ENCODE measurements at regions of chr3 and their contacts with region 1.

Region 1: DNA sequence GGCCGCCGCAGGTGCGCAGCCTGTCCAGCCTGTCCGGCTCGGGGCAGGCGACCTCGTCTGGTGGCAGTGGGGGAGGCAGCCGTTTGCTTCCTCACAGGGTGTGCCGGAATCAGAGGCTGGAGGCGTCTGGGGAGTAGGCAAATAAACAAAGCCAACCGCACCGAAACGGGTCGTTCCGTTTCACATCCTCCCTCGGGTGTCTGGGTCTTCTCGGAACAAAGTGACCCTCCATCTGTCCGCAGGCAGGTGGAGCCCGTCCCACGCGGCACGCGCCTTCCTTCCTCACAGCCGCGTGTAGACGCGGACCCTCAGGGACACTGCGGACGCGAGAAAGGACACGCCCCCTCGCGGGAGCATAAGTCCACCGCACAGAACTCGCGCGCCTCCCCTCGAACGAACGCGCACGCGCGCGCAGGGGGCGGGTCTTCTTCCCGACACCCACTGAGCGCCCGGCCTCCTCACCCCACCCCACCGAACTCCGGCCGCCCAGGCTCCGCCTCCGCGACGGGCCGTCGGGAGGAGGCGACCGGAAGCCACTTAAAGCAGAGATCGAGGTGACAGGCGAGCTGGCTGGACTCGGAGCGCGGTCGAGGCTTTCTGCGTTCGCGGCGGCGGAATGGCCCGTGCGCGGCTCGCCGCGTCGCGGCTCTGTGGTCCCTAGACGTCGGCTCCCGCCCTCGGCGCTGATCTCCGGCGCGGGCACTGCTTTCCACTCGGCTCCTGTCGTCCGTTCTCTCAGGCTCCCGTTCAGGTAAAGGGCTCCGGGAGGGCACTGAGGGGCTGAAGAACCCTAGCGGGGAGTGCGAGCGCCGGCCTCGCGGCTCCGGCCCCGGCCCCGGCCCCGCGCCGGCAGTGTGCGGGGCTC is at the start of gene TIPARP:
- DNase-seq: peak; percentile 99
- H3K4me3 ChIP-seq: peak within 1 kb of the TSS; percentile 93
- H3K4me3 Mint-ChIP-seq: peak within 1 kb of the TSS; percentile 90 to 98 (median 97)
- H3K27ac ChIP-seq: peak within 1 kb of the TSS; percentile 95
- H3K27ac Mint-ChIP-seq: peak within 1 kb of the TSS; percentile 86 to 99 (median 98)
- H3K4me1 ChIP-seq: peaks cover 35% of the 10 kb centered on the region
- H3K4me1 Mint-ChIP-seq: peaks cover 40 to 44% (median 42%) of the 10 kb centered on the region in 3 donors
- H3K27me3 ChIP-seq: no peaks in the 10 kb centered on the region
- H3K27me3 Mint-ChIP-seq: no peaks in the 10 kb centered on the region
- total RNA-seq, gene TIPARP: 36.0 to 37.0 TPM

Region 2: GRCh38 chr3:155037508-155038202 is 1636.6 kb before region 1 on chr3:
- CTCF ChIA-PET with region 1: no interaction called
- POLR2A ChIA-PET with region 1: no interaction called
- DNase-seq: no peak
- H3K4me3 ChIP-seq: no peak overlapping the region
- H3K4me3 Mint-ChIP-seq: no peak overlapping the region
- H3K27ac ChIP-seq: peak overlapping the region; percentile 21
- H3K27ac Mint-ChIP-seq: no peak overlapping the region
- H3K4me1 ChIP-seq: no peaks in the 10 kb centered on the region
- H3K4me1 Mint-ChIP-seq: no peaks in the 10 kb centered on the region
- H3K27me3 ChIP-seq: no peaks in the 10 kb centered on the region
- H3K27me3 Mint-ChIP-seq: no peaks in the 10 kb centered on the region

Region 3: DNA sequence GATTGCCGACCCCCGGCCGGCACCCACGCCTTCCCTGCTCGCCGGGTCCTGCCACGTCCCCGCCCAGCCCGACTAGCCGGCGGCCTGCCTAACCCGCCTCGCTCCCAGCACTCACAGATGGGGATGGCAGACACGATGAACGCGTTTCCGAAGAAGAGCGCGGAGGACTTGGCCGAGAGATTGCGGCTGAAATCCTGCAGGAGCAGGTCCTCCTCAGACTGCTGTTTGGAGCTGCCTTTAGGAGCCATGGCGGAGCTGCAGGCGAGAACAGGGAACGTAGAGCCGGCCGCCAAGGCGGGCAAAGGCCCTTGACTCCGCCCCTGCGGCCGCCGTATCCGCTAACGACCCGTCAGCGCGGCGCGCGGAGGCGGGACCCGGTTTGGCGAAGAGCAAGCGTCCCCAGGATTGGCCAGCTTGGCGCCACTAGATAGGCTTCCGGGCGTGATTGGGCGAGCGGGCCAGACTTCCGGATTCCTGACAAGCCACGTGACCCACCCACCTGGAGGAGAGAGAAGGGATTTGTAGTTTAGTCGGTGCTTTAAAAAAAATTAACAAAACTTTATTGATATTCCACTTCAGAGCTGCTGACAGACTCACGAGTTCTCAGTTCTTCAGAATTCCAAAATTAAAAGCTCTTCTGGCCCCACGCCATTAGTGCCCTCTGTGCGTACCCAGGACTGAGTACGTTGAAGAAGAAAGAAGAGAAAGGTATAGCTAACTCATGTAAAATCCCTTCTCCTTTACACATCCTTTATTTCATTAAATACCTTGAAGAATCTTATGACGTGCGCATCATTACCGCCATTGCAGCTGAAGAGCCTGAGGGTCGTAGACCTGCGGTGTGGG is 119.2 kb before region 1 on chr3 and contains the start of gene SSR3:
- CTCF ChIA-PET with region 1: interaction called, 27 read pairs
- POLR2A ChIA-PET with region 1: interaction called, 30 read pairs
- DNase-seq: peak; percentile 98 to 99 (median 99)
- H3K4me3 ChIP-seq: peak within 1 kb of the TSS; percentile 92
- H3K4me3 Mint-ChIP-seq: peak within 1 kb of the TSS; percentile 96 to 99 (median 97)
- H3K27ac ChIP-seq: peak within 1 kb of the TSS; percentile 91
- H3K27ac Mint-ChIP-seq: peak within 1 kb of the TSS; percentile 85 to 98 (median 96)
- H3K4me1 ChIP-seq: peaks cover 29% of the 10 kb centered on the region
- H3K4me1 Mint-ChIP-seq: peaks cover 46 to 56% (median 55%) of the 10 kb centered on the region in 3 donors
- H3K27me3 ChIP-seq: no peaks in the 10 kb centered on the region
- H3K27me3 Mint-ChIP-seq: no peaks in the 10 kb centered on the region
- total RNA-seq, gene SSR3: 171 to 175 TPM

Region 4: DNA sequence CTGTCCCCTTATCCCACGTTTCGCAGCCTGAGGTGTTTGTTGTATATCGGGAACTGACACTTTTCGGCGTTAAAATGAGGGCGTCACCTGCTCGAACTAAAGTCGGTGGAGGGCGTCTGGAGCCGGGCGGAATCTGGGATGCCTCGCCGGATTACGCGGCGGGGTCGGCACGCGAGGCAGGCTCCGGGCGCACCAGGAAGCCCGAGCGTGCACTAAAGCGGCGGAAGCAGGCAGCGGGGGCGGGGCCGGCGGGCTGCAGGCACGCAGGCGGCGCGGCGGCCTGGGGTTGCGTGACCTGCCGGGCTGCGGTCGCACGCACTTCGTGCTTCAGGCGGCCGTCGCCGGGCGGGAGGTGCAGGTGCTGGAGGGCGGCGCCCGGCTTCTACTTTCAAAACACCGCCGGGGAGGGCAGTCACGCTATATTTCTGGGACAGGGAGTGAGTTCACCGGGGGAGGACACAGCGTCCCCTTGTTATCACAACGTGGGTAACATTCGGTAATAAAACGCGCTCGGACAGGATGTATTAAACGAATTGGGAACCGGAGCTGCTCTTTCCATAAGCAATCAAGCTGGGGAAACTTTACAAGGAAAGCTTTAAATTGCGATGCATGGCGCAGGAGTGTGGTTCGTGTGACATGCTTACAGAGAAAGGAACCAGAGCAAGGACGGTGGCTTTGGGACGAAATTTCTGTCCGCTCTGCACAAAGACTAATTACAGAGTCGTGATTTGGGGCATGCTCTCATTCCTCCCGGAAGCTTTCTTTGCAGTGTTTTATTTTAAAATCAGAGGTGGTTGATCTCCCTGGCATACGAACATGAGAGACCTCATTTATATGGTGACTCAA is 142.7 kb after region 1 on chr3:
- CTCF ChIA-PET with region 1: interaction called, 12 read pairs
- POLR2A ChIA-PET with region 1: interaction called, 8 read pairs
- DNase-seq: peak; percentile 73 to 91 (median 84)
- H3K4me3 ChIP-seq: peak overlapping the region; percentile 83
- H3K4me3 Mint-ChIP-seq: peak overlapping the region; percentile 95 to 97 (median 95)
- H3K27ac ChIP-seq: peak overlapping the region; percentile 43
- H3K27ac Mint-ChIP-seq: peak overlapping the region; percentile 85 to 99 (median 97)
- H3K4me1 ChIP-seq: peaks cover 9% of the 10 kb centered on the region
- H3K4me1 Mint-ChIP-seq: peaks cover 44 to 53% (median 52%) of the 10 kb centered on the region in 3 donors
- H3K27me3 ChIP-seq: no peaks in the 10 kb centered on the region
- H3K27me3 Mint-ChIP-seq: peaks cover 0 to 2% of the 10 kb centered on the region in 2 donors

Region 5: DNA sequence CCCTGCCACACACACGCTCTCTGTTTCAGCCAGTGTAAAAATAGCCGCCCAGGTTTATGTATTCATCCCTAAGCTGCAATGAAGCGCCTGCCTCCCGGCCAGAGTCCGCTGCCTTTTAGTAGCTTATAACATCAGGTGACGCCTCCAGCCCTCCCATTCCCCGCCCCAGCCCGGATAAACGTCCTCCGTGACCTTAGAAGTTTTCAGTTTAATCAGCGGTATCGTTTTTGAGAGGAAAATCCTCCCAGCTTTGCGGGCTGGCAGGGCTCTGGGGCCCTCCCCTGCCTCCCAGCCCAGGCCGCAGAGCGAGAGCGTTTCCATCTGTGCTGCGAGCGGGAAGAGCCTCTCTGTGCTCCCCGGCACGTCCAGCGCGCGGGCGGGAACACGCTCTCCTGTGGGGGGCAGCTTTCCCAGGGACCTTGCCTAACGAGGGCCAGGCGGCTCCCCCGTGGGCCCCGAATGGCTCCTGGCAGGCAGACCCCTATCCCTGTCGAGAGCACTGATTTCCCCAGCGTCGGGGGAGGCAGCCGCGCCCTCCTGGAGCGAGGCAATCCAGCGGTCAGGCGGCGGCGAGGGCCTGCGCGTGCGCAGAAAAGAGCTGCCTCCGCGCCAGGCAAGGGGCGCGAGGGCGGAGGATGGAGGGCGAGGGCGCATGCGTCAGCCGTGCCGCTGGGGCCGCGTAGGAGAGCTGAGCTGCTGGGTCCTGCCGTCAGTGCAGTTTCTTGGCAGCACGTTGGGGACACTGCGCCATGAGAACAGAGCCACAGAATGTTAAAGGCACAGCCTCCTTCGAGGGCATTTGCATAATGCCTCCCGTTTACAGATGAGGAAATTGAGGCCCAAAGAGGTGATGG is 414.6 kb after region 1 on chr3:
- CTCF ChIA-PET with region 1: interaction called, 33 read pairs
- POLR2A ChIA-PET with region 1: interaction called, 5 read pairs
- DNase-seq: peak; percentile 88 to 96 (median 93)
- H3K4me3 ChIP-seq: peak overlapping the region; percentile 72
- H3K4me3 Mint-ChIP-seq: peak overlapping the region; percentile 84 to 95 (median 88)
- H3K27ac ChIP-seq: peak overlapping the region; percentile 68
- H3K27ac Mint-ChIP-seq: peak overlapping the region; percentile 97 to 99 (median 98)
- H3K4me1 ChIP-seq: peaks cover 20% of the 10 kb centered on the region
- H3K4me1 Mint-ChIP-seq: peaks cover 27 to 56% (median 49%) of the 10 kb centered on the region in 3 donors
- H3K27me3 ChIP-seq: no peaks in the 10 kb centered on the region
- H3K27me3 Mint-ChIP-seq: no peaks in the 10 kb centered on the region

Region 6: GRCh38 chr3:157159762-157160657 is 485.7 kb after region 1 on chr3 and contains the start of gene CCNL1:
- CTCF ChIA-PET with region 1: interaction called, 6 read pairs
- POLR2A ChIA-PET with region 1: interaction called, 28 read pairs
- DNase-seq: peak; percentile 92 to 97 (median 96)
- H3K4me3 ChIP-seq: peak within 1 kb of the TSS; percentile 96
- H3K4me3 Mint-ChIP-seq: peak within 1 kb of the TSS; percentile 90 to 99 (median 93)
- H3K27ac ChIP-seq: peak within 1 kb of the TSS; percentile 100
- H3K27ac Mint-ChIP-seq: peak within 1 kb of the TSS; percentile 96 to 100 (median 100)
- H3K4me1 ChIP-seq: peaks cover 46% of the 10 kb centered on the region
- H3K4me1 Mint-ChIP-seq: peaks cover 53 to 63% (median 54%) of the 10 kb centered on the region in 3 donors
- H3K27me3 ChIP-seq: no peaks in the 10 kb centered on the region
- H3K27me3 Mint-ChIP-seq: peaks cover 0 to 5% of the 10 kb centered on the region in 2 donors
- total RNA-seq, gene CCNL1: 125 to 126 TPM